ENCODE measurements at regions of chr6 and their contacts with region 1.

Region 1: DNA sequence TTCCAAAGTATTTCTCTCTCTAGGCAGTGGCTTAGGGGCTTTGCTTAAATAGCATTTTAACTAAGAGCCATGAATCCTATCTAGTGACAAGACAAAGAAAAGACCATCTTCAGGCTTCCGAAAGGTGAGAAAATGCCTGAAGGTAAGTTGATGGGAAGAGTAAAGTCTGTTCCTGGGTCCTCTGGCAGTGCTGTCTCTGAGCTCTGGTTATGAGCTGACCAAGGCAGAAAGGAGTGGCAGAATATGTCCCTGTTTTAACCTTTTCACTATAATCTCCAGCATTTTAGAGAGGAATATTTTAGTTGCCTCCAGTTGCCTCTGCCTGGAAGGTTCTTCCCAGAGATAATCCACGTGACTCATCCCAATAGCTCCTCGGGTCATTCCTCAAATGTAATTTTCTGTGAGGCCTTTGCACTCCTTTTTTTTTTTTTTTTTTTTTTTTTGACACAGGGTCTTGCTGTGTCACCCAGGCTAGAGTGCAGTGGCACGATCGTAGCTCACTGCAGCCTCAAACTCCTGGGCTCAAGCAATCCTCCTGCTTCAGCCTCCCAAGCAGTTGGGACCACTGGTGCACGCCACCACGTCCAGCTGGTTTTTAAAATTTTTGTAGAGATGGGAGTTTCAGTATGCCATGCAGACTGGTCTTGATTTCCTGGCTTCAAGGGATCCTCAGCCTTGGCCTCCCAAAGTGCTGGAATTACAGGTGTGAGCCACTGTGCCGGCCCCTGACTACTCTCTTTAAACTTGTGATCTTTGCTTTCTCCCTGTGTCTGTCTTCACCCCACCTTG is 3.7 kb upstream of the ARMH2 start:
- DNase-seq: no peak
- H3K4me3 ChIP-seq: no peak overlapping the region
- H3K27ac ChIP-seq: no peak overlapping the region
- H3K27me3 ChIP-seq: no peaks in the 10 kb centered on the region
- CTCF ChIP-seq: no peak

Region 2: GRCh38 chr6:24818346-24818745 is 15.9 kb after region 1 on chr6:
- CTCF ChIA-PET with region 1: interaction called, 12 read pairs
- POLR2A ChIA-PET with region 1: no interaction called
- DNase-seq: no peak
- H3K4me3 ChIP-seq: no peak overlapping the region
- H3K27ac ChIP-seq: no peak overlapping the region
- H3K27me3 ChIP-seq: no peaks in the 10 kb centered on the region
- CTCF ChIP-seq: no peak